Mammary epithelial cell (primary cell): ENCODE measurements at regions of chr6 and their contacts with region 1.

Region 1: GRCh38 chr6:120378582-120379220 is 955.6 kb downstream of the TBC1D32 start:
- DNase-seq: peak; percentile 40
- H3K4me3 ChIP-seq: no peak overlapping the region
- H3K27ac ChIP-seq: no peak overlapping the region
- H3K4me1 ChIP-seq: no peaks in the 10 kb centered on the region
- H3K27me3 ChIP-seq: no peaks in the 10 kb centered on the region
- CTCF ChIP-seq: peak; percentile 79 to 83

Region 2: GRCh38 chr6:119986934-119987549 is 391.7 kb before region 1 on chr6:
- CTCF ChIA-PET with region 1: no interaction called
- dilution Hi-C with region 1: no loop called
- in situ Hi-C with region 1: no loop called
- intact Hi-C with region 1: loop called (anchors 5 kb)
- DNase-seq: no peak
- H3K4me3 ChIP-seq: no peak overlapping the region
- H3K27ac ChIP-seq: no peak overlapping the region
- H3K4me1 ChIP-seq: no peaks in the 10 kb centered on the region
- H3K27me3 ChIP-seq: no peaks in the 10 kb centered on the region
- CTCF ChIP-seq: no peak